ENCODE measurements at regions of chr21 and their contacts with region 1.

Region 1: GRCh38 chr21:17679002-17679600 is 66.4 kb upstream of the BTG3 start:
- DNase-seq: peak in 5 of 14 experiments; percentile 1 to 81 (median 79)
- ATAC-seq: peak; percentile 97
- H3K4me3 ChIP-seq: no peak overlapping the region
- H3K4me3 Mint-ChIP-seq: no peak overlapping the region
- H3K27ac ChIP-seq: no peak overlapping the region
- H3K27ac Mint-ChIP-seq: no peak overlapping the region
- H3K4me1 ChIP-seq: no peaks in the 10 kb centered on the region
- H3K4me1 Mint-ChIP-seq: no peaks in the 10 kb centered on the region
- H3K27me3 ChIP-seq: no peaks in the 10 kb centered on the region
- H3K27me3 Mint-ChIP-seq: no peaks in the 10 kb centered on the region
- CTCF ChIP-seq: peak; percentile 81

Region 2: GRCh38 chr21:17903029-17903806 is 224.1 kb after region 1 on chr21:
- CTCF ChIA-PET with region 1: interaction called, 6 read pairs
- POLR2A ChIA-PET with region 1: no interaction called
- intact Hi-C with region 1: loop called (anchors 1 kb)
- DNase-seq: peak in 3 of 14 experiments; percentile 64 to 74 (median 66)
- ATAC-seq: peak; percentile 48
- H3K4me3 ChIP-seq: no peak overlapping the region
- H3K4me3 Mint-ChIP-seq: no peak overlapping the region
- H3K27ac ChIP-seq: no peak overlapping the region
- H3K27ac Mint-ChIP-seq: no peak overlapping the region
- H3K4me1 ChIP-seq: no peaks in the 10 kb centered on the region
- H3K4me1 Mint-ChIP-seq: peaks cover 9% of the 10 kb centered on the region
- H3K27me3 ChIP-seq: no peaks in the 10 kb centered on the region
- H3K27me3 Mint-ChIP-seq: no peaks in the 10 kb centered on the region
- CTCF ChIP-seq: peak; percentile 69

Region 3: DNA sequence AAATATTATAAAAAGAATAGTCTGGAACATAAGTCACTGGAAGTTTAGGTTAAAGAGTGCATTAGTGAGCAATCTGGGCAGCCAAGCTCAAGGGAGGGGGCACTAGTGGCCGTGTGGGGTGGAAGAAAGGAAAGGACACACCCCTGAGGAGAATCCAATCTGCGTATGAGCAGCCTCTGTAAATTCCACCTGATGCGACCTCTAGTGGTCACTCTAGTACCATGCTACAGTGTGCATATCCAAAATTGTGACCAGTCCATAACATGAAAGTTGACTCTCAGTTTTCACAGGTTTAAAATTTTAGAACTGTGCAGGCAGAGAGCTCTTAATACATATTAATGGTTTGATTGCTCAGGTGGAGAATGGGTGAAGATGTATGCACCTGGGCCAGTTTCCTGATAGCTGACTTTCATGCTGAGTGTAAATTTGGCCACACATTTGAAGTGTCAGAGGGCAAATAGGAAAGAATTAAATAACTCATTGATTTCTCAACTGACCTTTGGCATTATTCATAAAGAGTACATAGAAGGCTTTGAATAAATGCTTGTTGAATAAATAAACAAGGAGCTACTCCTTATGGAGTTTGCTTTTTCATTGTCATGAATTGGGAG is 246.0 kb after region 1 on chr21:
- CTCF ChIA-PET with region 1: interaction called, 4 read pairs
- POLR2A ChIA-PET with region 1: no interaction called
- intact Hi-C with region 1: loop called (anchors 1 kb)
- DNase-seq: peak in 12 of 14 experiments; percentile 15 to 78 (median 38)
- ATAC-seq: peak; percentile 84
- H3K4me3 ChIP-seq: no peak overlapping the region
- H3K4me3 Mint-ChIP-seq: no peak overlapping the region
- H3K27ac ChIP-seq: no peak overlapping the region
- H3K27ac Mint-ChIP-seq: no peak overlapping the region
- H3K4me1 ChIP-seq: peaks cover 4% of the 10 kb centered on the region
- H3K4me1 Mint-ChIP-seq: no peaks in the 10 kb centered on the region
- H3K27me3 ChIP-seq: no peaks in the 10 kb centered on the region
- H3K27me3 Mint-ChIP-seq: no peaks in the 10 kb centered on the region
- CTCF ChIP-seq: peak; percentile 99